Calu3 (cell line): ENCODE measurements at regions of chr2 and their contacts with region 1.

Region 1: GRCh38 chr2:4291430-4291829 is 588.1 kb downstream of the DCDC2C start:
- DNase-seq: no peak
- H3K4me3 Mint-ChIP-seq: no peak overlapping the region
- H3K27ac Mint-ChIP-seq: no peak overlapping the region
- H3K4me1 Mint-ChIP-seq: no peaks in the 10 kb centered on the region
- H3K27me3 Mint-ChIP-seq: no peaks in the 10 kb centered on the region
- CTCF ChIP-seq: no peak

Region 2: DNA sequence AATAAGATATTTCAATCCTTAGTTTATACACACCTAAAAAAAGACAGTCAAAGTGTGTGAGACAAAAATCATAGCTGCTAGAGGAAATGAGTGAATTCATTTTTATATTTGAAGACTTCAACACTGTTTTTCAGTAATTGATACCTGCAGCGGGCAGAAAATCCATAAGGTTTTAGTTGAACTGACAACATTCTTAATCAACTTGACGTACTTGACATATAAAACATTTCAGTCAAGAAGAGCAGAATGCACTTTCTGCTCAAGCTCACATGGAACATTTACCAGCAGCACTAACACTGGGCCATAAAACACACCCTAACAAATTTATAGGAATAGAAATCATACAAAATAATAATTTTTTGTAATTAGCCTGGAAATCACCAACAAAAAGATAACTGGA is 441.1 kb after region 1 on chr2:
- CTCF ChIA-PET with region 1: no interaction called
- intact Hi-C with region 1: loop called (anchors 5 kb)
- DNase-seq: no peak
- H3K4me3 Mint-ChIP-seq: no peak overlapping the region
- H3K27ac Mint-ChIP-seq: no peak overlapping the region
- H3K4me1 Mint-ChIP-seq: no peaks in the 10 kb centered on the region
- H3K27me3 Mint-ChIP-seq: no peaks in the 10 kb centered on the region
- CTCF ChIP-seq: no peak